ENCODE measurements at regions of chr1 and their contacts with region 1.

Region 1: GRCh38 chr1:243708210-243708609 is 141.8 kb downstream of the AKT3 start:
- H3K4me3 Mint-ChIP-seq: no peak overlapping the region
- H3K27ac Mint-ChIP-seq: no peak overlapping the region
- H3K4me1 Mint-ChIP-seq: peaks cover 12% of the 10 kb centered on the region
- H3K27me3 Mint-ChIP-seq: no peaks in the 10 kb centered on the region

Region 2: DNA sequence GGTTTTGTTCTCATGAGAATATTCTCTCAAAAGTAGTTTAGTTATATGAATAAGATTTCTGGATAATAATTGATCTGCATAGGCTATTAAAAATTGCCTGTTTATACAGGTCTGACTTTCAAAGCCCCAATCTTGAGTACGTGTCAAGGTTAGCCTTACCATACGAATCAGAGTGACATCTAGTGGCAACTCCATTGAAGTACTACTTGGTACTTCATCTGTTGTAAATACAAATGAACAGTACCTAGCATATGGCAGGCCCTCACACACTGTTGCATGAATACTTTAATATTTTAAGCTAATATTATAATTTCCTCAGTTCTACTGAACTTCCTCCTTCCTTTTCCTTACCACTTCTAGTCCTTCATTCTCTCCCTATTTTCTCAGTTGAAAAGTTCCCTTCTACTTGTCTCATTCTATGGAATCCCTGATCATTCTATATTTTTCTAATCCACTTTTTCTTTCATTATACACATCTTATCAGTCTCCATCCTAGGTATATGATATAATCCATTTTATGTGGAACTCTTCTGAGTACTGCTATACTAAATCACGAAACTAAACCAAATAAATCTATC is 40.6 kb after region 1 on chr1:
- intact Hi-C with region 1: loop called (anchors 2 kb)
- H3K4me3 Mint-ChIP-seq: no peak overlapping the region
- H3K27ac Mint-ChIP-seq: no peak overlapping the region
- H3K4me1 Mint-ChIP-seq: peaks cover 6% of the 10 kb centered on the region
- H3K27me3 Mint-ChIP-seq: no peaks in the 10 kb centered on the region

Region 3: GRCh38 chr1:243946946-243947345 is 238.7 kb after region 1 on chr1:
- intact Hi-C with region 1: loop called (anchors 5 kb)
- H3K4me3 Mint-ChIP-seq: no peak overlapping the region
- H3K27ac Mint-ChIP-seq: no peak overlapping the region
- H3K4me1 Mint-ChIP-seq: no peaks in the 10 kb centered on the region
- H3K27me3 Mint-ChIP-seq: no peaks in the 10 kb centered on the region

Measured in dendritic cell treated with granulocyte-macrophage colony-stimulating factor and Interleukin-4, amounts not matched to agents 40 ng/mL and 50 ng/mL, for 4 days (primary cell).